H1 (cell line): ENCODE measurements at regions of chr17 and their contacts with region 1.

Region 1: GRCh38 chr17:48259694-48260291 is 152.2 kb downstream of the SNX11 start:
- DNase-seq: no peak
- H3K4me3 ChIP-seq: no peak overlapping the region
- H3K27ac ChIP-seq: no peak overlapping the region
- H3K4me1 ChIP-seq: peaks cover 0 to 6% (median 0%) of the 10 kb centered on the region in 4 experiments; a peak in 1 of 7 replicates
- H3K27me3 ChIP-seq: no peaks in the 10 kb centered on the region
- CTCF ChIP-seq: peak in 2 of 3 experiments; percentile 69 to 70; a peak in 3 of 4 replicates
- EP300 ChIP-seq: no peak
- POLR2A ChIP-seq: no peak
- RAD21 ChIP-seq: peak; percentile 70 to 74

Region 2: DNA sequence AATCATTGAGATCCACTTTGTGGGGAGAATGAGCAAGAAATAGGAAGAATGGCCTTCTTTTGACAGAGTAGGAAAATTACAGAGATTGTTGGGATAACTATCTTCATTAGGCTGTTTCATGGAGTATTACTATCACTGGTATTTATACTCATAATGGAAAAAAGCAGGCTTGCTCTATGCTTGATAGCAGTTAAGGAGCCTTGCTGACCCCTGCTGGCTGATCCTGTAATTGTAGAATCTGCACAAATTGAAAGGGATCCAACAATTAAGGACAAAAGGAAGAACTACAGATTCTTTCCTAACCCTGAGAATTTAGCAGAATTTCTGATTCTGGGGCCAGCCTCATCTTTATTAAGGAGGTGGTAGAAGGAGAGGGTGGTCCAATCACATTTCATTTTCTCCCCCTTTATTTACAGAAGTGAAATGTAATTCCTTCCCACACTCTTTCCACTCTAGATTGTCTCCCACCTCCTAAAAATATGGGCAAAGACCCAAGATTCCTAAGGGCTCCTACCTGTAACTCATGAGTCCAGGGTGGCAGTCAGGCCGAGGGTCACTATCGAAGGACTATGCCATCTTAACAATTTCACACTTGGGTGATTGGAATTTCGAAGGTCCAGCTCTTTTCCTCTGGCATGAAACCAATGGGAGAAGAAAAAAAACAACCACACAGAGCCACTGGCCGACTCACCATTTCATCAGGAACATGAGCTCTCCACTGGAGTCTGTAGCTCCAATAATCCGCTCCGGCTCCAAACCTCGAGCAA is 185.3 kb before region 1 on chr17:
- CTCF ChIA-PET with region 1: no interaction called
- POLR2A ChIA-PET with region 1: no interaction called
- DNase-seq: peak in 1 of 2 experiments; percentile 83
- H3K4me3 ChIP-seq: no peak overlapping the region
- H3K27ac ChIP-seq: no peak overlapping the region
- H3K4me1 ChIP-seq: no peaks in the 10 kb centered on the region
- H3K27me3 ChIP-seq: no peaks in the 10 kb centered on the region
- CTCF ChIP-seq: peak in 2 of 3 experiments; percentile 75 to 77; a peak in 3 of 4 replicates
- EP300 ChIP-seq: no peak
- POLR2A ChIP-seq: no peak
- RAD21 ChIP-seq: peak; percentile 67 to 75

Region 3: DNA sequence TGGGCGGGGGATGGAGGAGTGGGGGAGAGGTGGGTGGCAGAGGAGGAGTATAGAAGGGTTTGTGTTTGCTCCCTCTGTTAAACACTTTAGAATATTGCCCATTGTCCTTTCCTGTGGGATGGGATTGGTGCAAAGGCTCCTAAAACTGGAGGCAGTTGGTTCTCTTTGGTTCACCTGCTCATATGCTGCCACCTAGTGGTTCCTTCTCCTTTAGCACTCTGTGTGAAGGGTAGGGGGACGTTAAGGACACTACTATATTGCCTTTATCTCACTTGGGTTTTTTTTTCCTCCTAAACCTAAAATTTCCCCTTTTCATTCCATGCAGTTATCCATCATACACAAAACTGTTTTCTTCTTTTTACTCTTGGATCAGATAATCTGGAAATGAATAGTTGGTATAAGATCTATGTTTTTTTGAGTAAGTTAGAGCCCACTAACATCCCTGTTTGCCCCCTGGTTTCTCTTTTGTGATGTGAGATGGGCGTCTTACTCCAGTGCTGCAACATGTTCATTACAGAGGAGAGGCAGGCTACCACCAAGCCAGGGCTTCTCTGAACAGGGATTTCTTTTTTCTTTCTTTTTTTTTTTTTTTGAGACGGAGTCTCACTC is 128.5 kb before region 1 on chr17:
- CTCF ChIA-PET with region 1: no interaction called
- POLR2A ChIA-PET with region 1: no interaction called
- DNase-seq: peak; percentile 15 to 68
- H3K4me3 ChIP-seq: no peak overlapping the region
- H3K27ac ChIP-seq: no peak overlapping the region
- H3K4me1 ChIP-seq: no peaks in the 10 kb centered on the region
- H3K27me3 ChIP-seq: no peaks in the 10 kb centered on the region
- CTCF ChIP-seq: peak; percentile 6 to 87 (median 87)
- EP300 ChIP-seq: no peak
- POLR2A ChIP-seq: no peak
- RAD21 ChIP-seq: peak; percentile 89 to 91

Region 4: DNA sequence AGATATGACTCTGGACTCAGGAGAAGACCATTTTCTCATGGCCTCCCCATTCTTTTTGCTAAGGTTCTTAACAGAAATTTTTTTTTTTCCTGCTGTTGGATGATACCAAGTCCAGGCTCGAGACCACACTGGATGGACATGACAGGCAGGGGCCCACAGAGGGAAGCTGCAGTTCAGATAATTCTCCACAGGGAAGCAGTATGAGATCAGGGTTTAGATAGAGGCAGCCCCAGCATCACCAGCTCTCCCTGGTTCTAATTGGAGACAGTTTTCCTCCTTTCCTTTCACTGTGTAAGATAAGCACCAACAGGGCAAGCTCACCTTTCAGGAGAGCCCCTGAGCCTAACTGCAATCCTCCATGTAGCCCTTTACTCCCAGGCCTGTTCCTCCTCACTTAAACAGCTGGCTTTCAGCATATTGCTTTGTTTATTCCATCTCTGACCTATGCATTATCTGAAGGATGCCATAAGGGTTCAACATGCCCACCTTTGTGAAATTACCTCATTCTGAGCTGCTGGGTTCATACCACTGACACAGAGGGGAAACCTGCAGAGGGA is 44.1 kb before region 1 on chr17:
- CTCF ChIA-PET with region 1: interaction called, 40 read pairs
- POLR2A ChIA-PET with region 1: no interaction called
- DNase-seq: peak in 1 of 2 experiments; percentile 47
- H3K4me3 ChIP-seq: no peak overlapping the region
- H3K27ac ChIP-seq: no peak overlapping the region
- H3K4me1 ChIP-seq: no peaks in the 10 kb centered on the region; a peak in 1 of 7 replicates
- H3K27me3 ChIP-seq: peaks cover 0 to 3% (median 1%) of the 10 kb centered on the region in 4 experiments; a peak in 3 of 7 replicates
- CTCF ChIP-seq: peak; percentile 63 to 78 (median 77)
- EP300 ChIP-seq: no peak
- POLR2A ChIP-seq: no peak
- RAD21 ChIP-seq: peak; percentile 93

Region 5: DNA sequence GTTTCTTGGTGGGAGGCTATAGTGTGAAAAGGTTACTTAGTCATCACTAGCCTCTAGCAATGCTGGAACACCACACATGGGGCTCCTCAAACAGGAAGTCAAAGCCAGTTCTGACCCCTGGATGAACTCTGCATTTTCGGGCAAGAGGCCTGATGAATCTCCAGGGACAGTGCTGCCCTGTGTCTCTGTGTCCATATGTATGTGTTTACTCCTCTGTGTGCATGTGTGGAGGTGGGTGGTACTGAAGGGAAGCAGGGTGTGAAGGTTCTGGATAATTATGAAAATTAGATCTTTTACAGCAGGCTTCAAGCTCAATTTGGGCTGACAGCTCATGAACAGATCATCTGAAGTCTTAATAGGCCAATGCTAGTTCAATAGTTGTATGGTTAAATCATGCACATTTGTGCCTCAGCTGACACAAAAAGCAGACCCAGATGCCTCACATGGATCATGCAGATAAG is 18.6 kb before region 1 on chr17:
- CTCF ChIA-PET with region 1: interaction called, 45 read pairs
- POLR2A ChIA-PET with region 1: interaction called, 4 read pairs
- DNase-seq: no peak
- H3K4me3 ChIP-seq: no peak overlapping the region
- H3K27ac ChIP-seq: no peak overlapping the region
- H3K4me1 ChIP-seq: peaks cover 0 to 8% (median 2%) of the 10 kb centered on the region in 4 experiments; a peak in 2 of 7 replicates
- H3K27me3 ChIP-seq: no peaks in the 10 kb centered on the region
- CTCF ChIP-seq: no peak
- EP300 ChIP-seq: no peak
- POLR2A ChIP-seq: no peak
- RAD21 ChIP-seq: no peak

Region 6: GRCh38 chr17:48270896-48271295 is 11.1 kb after region 1 on chr17:
- CTCF ChIA-PET with region 1: interaction called, 71 read pairs
- POLR2A ChIA-PET with region 1: no interaction called
- DNase-seq: no peak
- H3K4me3 ChIP-seq: no peak overlapping the region
- H3K27ac ChIP-seq: no peak overlapping the region
- H3K4me1 ChIP-seq: no peaks in the 10 kb centered on the region
- H3K27me3 ChIP-seq: no peaks in the 10 kb centered on the region
- CTCF ChIP-seq: no peak
- EP300 ChIP-seq: no peak
- POLR2A ChIP-seq: no peak
- RAD21 ChIP-seq: no peak

Region 7: DNA sequence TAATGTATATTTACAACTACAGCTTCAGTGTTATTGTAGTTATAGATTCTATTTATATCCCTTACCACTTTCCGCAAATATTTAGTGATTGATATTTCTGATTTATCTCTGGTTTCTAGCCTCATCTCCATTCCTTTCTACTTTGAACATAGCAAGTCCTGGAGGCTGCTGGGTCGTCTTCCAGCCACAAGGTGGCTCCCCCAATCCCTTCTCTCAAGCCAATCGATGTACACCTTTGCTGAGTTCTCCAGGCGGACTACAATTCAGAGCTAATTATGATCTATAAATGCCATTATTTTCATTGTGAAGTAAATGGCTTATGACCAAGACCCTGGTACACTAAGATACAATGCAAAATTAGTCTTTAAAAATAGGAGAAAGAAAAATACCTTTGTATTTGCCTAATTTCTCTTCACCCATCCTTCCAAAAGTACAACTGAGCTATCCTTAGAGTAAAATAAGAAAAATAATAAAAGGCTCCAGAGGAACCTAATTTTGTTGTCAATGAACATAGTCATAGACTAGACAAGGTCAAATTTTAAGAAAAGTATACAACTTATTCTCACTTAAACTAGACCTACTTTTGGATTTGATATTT is 48.1 kb after region 1 on chr17:
- CTCF ChIA-PET with region 1: interaction called, 19 read pairs
- POLR2A ChIA-PET with region 1: no interaction called
- DNase-seq: peak in 1 of 2 experiments; percentile 15
- H3K4me3 ChIP-seq: no peak overlapping the region
- H3K27ac ChIP-seq: no peak overlapping the region
- H3K4me1 ChIP-seq: no peaks in the 10 kb centered on the region
- H3K27me3 ChIP-seq: no peaks in the 10 kb centered on the region; a peak in 2 of 7 replicates
- CTCF ChIP-seq: peak; percentile 78 to 87 (median 81)
- EP300 ChIP-seq: no peak
- POLR2A ChIP-seq: no peak
- RAD21 ChIP-seq: peak; percentile 58 to 69